Cardiac septum (tissue), 1 donor: ENCODE measurements at regions of chr18 and their contacts with region 1.

Region 1: GRCh38 chr18:24075731-24076130 is 61.2 kb downstream of the TTC39C start:
- DNase-seq: no peak

Region 2: DNA sequence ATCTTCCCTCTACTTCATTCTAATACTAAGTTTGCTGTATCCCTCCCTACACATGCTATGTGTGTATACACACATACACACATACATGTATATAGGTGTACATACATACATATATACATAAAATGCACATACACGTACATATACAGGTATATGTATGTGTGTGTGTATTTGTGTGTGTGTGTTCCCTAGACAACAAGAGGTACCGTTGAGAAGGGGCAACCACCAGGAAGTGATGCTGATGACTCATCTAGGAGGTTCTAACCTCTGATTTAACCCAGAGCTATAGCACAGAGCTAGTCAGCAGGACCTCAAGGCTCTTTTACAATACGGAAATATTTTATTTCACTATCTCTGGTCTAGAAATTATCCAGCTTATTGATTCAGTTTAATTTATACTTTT is 247.3 kb before region 1 on chr18:
- intact Hi-C with region 1: loop called (anchors 5 kb)
- DNase-seq: no peak

Region 3: GRCh38 chr18:24014062-24014985 is 61.4 kb before region 1 on chr18 and contains the start of gene TTC39C:
- intact Hi-C with region 1: loop called (anchors 5 kb)
- DNase-seq: peak; percentile 84
- total RNA-seq, gene TTC39C: 9.2 TPM